ENCODE measurements at regions of chr4 and their contacts with region 1.

Region 1: GRCh38 chr4:98601708-98602107 is 56.7 kb downstream of the TSPAN5 start:
- DNase-seq: no peak
- H3K4me3 Mint-ChIP-seq: peak overlapping the region; percentile 60
- H3K27ac Mint-ChIP-seq: peak overlapping the region; percentile 93
- H3K4me1 Mint-ChIP-seq: peaks cover 51% of the 10 kb centered on the region
- H3K27me3 Mint-ChIP-seq: no peaks in the 10 kb centered on the region

Region 2: DNA sequence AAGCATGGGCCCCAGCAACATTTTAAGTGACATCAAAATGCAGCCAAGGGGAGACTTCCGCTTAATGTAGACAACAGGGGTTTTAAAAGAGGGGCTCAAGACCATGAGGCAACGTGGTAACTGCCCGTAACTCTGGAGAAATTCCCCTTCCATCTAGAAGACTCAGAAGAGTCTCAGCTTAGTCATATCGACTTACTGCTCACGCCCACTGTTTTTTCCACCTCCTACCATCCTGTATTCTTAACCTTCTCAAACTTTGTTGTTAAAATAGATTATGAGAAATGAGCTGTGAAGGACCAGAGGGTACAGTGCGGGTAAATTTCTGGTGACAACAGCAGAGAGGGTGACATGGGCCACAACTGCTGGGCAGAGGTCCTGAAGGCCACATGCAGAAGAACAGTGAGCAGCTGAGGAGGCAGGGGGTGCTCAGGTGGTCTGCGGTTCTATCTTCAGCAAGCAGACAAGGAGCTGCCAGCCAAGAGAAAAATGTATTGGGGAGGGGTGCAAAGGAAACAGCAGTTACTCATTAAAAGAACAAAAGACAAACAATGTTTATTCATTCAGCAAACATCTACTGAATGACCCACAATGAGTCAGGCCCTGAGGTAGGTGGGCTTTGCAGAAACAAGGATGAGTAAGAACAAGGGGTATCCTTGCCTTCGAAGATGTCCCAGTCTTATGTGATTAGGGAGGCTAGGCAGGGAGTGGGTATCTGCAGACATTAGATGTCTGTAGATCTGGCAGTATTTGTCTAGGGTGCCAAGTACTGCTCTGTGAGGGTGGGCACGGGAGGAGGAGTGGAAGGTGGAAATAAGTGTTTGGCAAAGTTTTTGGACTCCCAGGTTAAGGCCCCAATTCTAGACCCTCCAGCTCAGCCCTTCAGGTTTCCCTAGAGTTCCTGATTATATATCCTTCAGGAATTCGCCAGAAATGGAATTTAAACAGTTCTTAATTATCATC is 118.6 kb before region 1 on chr4:
- intact Hi-C with region 1: loop called (anchors 1 kb)
- DNase-seq: no peak
- H3K4me3 Mint-ChIP-seq: peak overlapping the region; percentile 70
- H3K27ac Mint-ChIP-seq: peak overlapping the region; percentile 99
- H3K4me1 Mint-ChIP-seq: peaks cover 88% of the 10 kb centered on the region
- H3K27me3 Mint-ChIP-seq: no peaks in the 10 kb centered on the region

Region 3: DNA sequence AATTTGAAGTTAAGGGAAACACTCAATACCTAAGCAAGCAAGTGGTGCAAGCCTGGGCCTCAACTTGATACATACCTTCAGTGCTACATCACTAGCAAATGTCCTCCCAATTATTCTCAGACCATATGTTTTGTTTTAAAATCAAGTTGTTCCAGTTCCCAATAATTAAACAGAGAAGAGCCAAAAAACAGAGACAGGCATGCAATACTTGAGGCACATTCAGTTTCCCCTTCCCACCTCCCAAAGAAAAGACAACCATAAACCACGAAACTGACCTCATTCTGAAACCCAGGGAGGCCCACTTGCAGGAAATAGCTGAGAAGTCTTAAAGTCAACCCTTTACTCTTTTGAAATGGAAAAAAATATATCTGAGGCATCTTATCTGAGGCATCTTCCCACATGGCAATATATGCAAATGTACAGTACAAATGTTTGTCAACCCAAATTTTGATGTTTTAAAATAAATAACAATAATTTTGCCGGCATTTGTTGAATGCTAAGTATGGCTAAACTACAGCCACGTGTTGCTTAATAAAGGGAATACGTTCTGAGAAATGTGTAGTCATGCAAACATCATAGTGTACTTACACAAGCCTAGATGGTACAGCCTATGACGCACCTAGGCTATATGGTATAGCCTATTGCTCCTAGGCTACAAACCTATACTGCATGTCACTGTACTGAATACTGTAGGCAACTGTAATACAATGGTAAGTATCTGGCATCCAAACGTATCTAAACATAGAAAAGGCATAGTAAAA is 90.8 kb before region 1 on chr4:
- intact Hi-C with region 1: loop called (anchors 1 kb)
- DNase-seq: peak; percentile 28
- H3K4me3 Mint-ChIP-seq: peak overlapping the region; percentile 50
- H3K27ac Mint-ChIP-seq: peak overlapping the region; percentile 70
- H3K4me1 Mint-ChIP-seq: peaks cover 80% of the 10 kb centered on the region
- H3K27me3 Mint-ChIP-seq: no peaks in the 10 kb centered on the region

Region 4: GRCh38 chr4:98571161-98571786 is 30.4 kb before region 1 on chr4:
- intact Hi-C with region 1: loop called (anchors 2 kb)
- DNase-seq: no peak
- H3K4me3 Mint-ChIP-seq: no peak overlapping the region
- H3K27ac Mint-ChIP-seq: peak overlapping the region; percentile 68
- H3K4me1 Mint-ChIP-seq: peaks cover 35% of the 10 kb centered on the region
- H3K27me3 Mint-ChIP-seq: no peaks in the 10 kb centered on the region

Region 5: GRCh38 chr4:98625399-98625798 is 23.7 kb after region 1 on chr4:
- intact Hi-C with region 1: loop called (anchors 2 kb)
- DNase-seq: no peak
- H3K4me3 Mint-ChIP-seq: no peak overlapping the region
- H3K27ac Mint-ChIP-seq: no peak overlapping the region
- H3K4me1 Mint-ChIP-seq: peaks cover 40% of the 10 kb centered on the region
- H3K27me3 Mint-ChIP-seq: no peaks in the 10 kb centered on the region

Region 6: DNA sequence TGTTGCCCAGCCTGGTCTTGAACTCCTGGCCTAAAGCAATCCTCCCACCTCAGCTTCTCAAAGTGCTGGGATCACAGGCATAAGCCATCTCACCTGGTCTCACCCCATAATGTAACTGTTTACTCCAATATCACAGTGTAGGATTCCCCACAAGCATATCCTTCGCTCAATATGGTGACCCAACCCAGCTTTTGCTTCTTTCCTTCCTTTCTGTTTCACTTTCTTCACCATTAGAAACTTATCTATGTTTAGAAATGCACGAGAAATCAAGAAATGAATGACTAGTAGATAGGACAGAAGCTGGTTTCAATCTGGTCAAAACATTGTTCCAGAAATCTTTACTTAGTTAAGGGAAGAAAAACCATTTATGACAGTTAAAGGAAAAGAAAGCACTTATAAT is 37.8 kb after region 1 on chr4:
- intact Hi-C with region 1: loop called (anchors 1 kb)
- DNase-seq: no peak
- H3K4me3 Mint-ChIP-seq: peak overlapping the region; percentile 66
- H3K27ac Mint-ChIP-seq: peak overlapping the region; percentile 81
- H3K4me1 Mint-ChIP-seq: peaks cover 44% of the 10 kb centered on the region
- H3K27me3 Mint-ChIP-seq: no peaks in the 10 kb centered on the region

Measured in activated T-helper 2 cell treated with anti-CD3 and anti-CD28 coated beads, Interferon-gamma antibody, Interleukin-2, Interleukin-4, amounts not matched to agents 10 μg/mL and 5 μg/mL and 100 μg/mL, durations not matched to agents 14 hours and 24 hours and 36 hours (primary cell).